H1 (cell line): ENCODE measurements at regions of chr17 and their contacts with region 1.

Region 1: GRCh38 chr17:81484195-81484979 is 28.2 kb downstream of the ACTG1 start:
- DNase-seq: peak; percentile 64 to 93
- H3K4me3 ChIP-seq: peak overlapping the region; percentile 27 to 66 (median 46)
- H3K27ac ChIP-seq: no peak overlapping the region
- H3K4me1 ChIP-seq: peaks cover 0 to 29% (median 16%) of the 10 kb centered on the region in 4 experiments; a peak in 6 of 7 replicates
- H3K27me3 ChIP-seq: peaks cover 18 to 49% (median 47%) of the 10 kb centered on the region in 4 experiments
- CTCF ChIP-seq: peak; percentile 85 to 97 (median 85)
- EP300 ChIP-seq: no peak
- POLR2A ChIP-seq: no peak
- RAD21 ChIP-seq: peak; percentile 85 to 92

Region 2: DNA sequence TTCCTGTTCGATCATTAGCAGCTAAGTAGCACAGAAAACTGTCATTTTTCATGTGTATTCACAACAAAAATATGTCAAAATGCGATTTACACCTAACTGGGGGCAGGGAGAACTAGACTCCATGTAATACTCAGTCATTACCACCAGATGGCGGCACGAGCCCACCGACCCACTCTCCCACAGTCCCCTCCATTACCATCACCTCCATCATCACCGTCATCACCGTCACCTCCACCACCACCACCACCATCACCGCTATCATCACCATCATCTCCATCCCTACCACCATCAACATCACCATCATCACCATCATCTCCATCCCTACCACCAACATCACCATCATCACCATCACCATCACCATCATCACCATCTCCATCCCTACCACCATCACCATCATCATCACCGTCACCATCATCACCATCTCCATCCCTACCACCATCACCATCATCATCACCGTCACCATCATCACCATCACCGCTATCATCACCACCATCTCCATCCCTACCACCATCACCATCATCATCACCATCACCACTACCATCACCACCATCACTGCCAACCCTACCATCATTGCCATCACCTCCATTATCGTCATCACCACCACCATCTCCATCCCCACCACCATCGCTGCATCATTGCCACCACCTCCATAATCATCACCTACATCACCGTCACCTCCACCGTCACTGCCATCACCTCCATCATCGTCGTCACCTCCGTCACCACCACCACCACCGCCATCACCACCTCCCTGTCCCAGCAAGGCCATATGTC is 230.8 kb before region 1 on chr17:
- CTCF ChIA-PET with region 1: interaction called, 50 read pairs
- POLR2A ChIA-PET with region 1: interaction called, 3 read pairs
- DNase-seq: peak in 1 of 2 experiments; percentile 74
- H3K4me3 ChIP-seq: no peak overlapping the region
- H3K27ac ChIP-seq: no peak overlapping the region
- H3K4me1 ChIP-seq: peaks cover 0 to 8% (median 2%) of the 10 kb centered on the region in 4 experiments; a peak in 3 of 7 replicates
- H3K27me3 ChIP-seq: no peaks in the 10 kb centered on the region
- CTCF ChIP-seq: peak; percentile 74 to 88 (median 87)
- EP300 ChIP-seq: no peak
- POLR2A ChIP-seq: no peak
- RAD21 ChIP-seq: peak; percentile 89 to 98

Region 3: DNA sequence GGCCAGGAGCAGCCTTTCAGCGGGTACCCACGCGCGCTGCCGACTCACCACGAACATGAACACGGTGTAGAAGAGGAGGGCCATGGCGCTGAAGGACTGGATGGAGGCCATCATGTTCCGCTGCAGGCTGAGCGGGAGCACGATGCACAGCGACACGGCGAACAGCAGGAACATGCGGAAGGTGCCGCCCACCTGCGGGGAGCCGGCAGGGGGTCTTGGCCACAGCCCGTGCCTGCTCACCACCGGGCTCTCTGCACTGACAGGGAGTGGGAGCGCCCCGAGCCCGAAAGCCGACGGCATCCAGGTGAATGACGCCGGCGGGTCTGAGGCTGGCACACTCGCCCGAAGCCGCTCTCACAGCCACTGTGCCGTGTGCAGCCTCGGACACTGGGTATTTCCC is 202.2 kb before region 1 on chr17:
- CTCF ChIA-PET with region 1: no interaction called
- POLR2A ChIA-PET with region 1: no interaction called
- DNase-seq: no peak
- H3K4me3 ChIP-seq: no peak overlapping the region
- H3K27ac ChIP-seq: no peak overlapping the region
- H3K4me1 ChIP-seq: peaks cover 0 to 12% (median 0%) of the 10 kb centered on the region in 4 experiments; a peak in 4 of 7 replicates
- H3K27me3 ChIP-seq: no peaks in the 10 kb centered on the region
- CTCF ChIP-seq: no peak
- EP300 ChIP-seq: no peak
- POLR2A ChIP-seq: no peak
- RAD21 ChIP-seq: no peak

Region 4: DNA sequence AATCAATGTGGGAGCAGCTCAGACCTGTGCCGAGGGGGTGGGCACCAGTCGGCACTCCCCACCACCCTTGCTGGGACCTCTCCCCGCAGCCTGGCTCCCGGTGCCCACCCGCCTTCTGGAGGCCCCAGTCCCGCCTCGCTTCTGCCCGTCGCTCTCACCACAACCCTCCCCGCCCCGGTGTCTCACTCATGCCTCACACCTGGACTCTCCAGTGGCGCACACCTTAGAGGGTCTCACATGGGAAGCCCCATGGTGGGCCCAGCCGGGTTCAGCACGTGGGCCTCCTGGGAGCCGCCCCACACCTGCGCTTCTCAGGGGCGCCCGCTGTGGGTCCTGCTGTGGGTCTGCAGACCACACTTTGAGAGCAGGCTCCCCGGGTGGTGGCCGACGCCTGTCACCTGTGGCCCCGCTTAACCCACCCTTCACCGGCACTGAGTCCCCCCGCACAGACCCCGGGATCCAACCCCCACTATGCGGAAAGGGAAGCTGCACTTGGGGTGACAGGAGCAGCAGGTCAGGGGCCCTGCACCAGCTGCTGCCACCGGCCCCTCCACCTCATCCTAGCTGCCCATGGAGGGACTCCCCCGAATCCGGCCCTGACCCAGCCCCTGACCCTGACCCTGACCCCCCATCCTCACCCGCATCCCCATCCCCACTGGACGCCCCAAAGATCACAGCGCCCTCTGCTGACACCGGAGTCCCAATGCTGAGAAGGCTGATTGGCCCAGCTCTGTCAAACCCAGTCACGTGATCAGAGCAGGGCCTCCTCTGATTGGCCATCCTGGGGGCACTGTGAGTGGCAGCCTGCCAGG is 161.9 kb before region 1 on chr17:
- CTCF ChIA-PET with region 1: interaction called, 14 read pairs
- POLR2A ChIA-PET with region 1: no interaction called
- DNase-seq: peak in 1 of 2 experiments; percentile 71
- H3K4me3 ChIP-seq: no peak overlapping the region
- H3K27ac ChIP-seq: no peak overlapping the region
- H3K4me1 ChIP-seq: peaks cover 0 to 6% (median 2%) of the 10 kb centered on the region in 4 experiments; a peak in 5 of 7 replicates
- H3K27me3 ChIP-seq: 0 out of 7 replicates have a peak, but pooled peaks cover 0 to 2% (median 0%) of the 10 kb centered on the region in 4 experiments
- CTCF ChIP-seq: peak; percentile 33 to 69 (median 64)
- EP300 ChIP-seq: no peak
- POLR2A ChIP-seq: no peak
- RAD21 ChIP-seq: peak in 1 of 2 experiments; percentile 38; a peak in 2 of 4 replicates

Region 5: DNA sequence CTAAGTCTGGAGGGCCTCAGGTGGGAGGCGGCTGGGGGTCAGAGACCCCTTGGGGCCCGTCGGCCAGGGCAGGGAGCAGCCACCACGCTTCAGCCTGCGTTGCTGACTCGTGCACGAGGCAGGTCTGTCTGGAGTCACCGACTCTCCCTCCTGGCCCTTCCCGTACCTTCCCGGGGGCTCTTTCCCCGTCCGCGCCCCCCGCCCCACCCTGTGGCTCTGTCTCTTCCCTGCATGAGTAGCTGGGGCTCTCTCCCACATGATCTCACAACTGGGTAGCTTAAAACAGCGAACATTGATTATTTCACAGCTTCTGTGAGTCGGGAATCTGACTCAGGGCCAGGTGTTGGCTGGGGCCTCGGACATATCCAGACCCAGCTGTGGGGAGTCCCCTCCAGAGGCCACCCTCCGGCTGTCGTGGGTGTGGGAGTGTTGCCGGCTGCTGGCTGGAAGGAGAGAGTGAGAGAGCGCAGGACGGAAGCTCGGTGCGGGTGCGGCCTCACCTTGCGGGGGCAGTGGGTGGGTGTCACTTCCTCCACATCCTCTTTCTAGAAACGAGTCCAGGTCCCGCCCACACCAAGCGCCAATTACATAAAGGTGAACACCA is 71.8 kb before region 1 on chr17:
- CTCF ChIA-PET with region 1: interaction called, 28 read pairs
- POLR2A ChIA-PET with region 1: interaction called, 3 read pairs
- DNase-seq: no peak
- H3K4me3 ChIP-seq: no peak overlapping the region
- H3K27ac ChIP-seq: no peak overlapping the region
- H3K4me1 ChIP-seq: peaks cover 0 to 3% (median 0%) of the 10 kb centered on the region in 4 experiments; a peak in 1 of 7 replicates
- H3K27me3 ChIP-seq: peaks cover 0 to 3% (median 0%) of the 10 kb centered on the region in 4 experiments; a peak in 3 of 7 replicates
- CTCF ChIP-seq: no peak
- EP300 ChIP-seq: no peak
- POLR2A ChIP-seq: no peak
- RAD21 ChIP-seq: no peak

Region 6: GRCh38 chr17:81440876-81441244 is 43.5 kb before region 1 on chr17:
- CTCF ChIA-PET with region 1: interaction called, 41 read pairs
- POLR2A ChIA-PET with region 1: no interaction called
- DNase-seq: peak; percentile 50 to 90
- H3K4me3 ChIP-seq: no peak overlapping the region
- H3K27ac ChIP-seq: no peak overlapping the region
- H3K4me1 ChIP-seq: peaks cover 0 to 2% (median under 1%) of the 10 kb centered on the region in 4 experiments; a peak in 3 of 7 replicates
- H3K27me3 ChIP-seq: no peaks in the 10 kb centered on the region
- CTCF ChIP-seq: peak; percentile 88 to 98 (median 94)
- EP300 ChIP-seq: no peak
- POLR2A ChIP-seq: no peak
- RAD21 ChIP-seq: peak; percentile 67 to 73

Region 7: DNA sequence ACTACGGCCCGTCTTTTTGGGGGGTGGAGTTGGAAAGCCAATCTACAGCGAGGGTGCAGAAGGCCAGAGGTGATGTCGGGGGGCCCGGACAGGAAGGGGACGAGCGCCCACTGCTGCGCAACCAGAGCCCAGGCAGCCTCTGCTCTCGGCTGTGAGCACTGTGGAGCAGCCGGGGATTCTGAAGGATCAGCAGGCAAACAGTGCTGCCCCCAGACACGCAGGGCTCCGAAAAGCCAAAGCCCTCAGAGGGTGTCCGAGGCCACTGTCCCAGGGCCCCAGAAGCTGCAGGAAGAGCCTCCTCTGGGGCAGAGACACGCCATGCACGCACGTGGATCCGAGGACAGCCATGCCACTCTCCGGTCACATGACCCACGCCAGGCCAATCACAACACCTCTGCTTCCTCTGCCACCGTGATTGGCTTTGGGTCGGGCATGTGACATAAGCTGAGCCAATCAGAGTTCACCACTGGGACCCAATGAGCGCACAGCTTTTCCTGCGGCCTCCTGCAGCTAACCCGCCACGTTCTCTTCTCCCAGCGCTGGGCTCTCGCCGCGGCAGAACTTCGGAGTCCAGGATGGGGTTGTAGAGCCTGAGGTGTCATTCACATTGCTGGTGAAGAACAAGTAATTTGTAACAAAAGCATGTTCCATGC is 12.5 kb before region 1 on chr17:
- CTCF ChIA-PET with region 1: interaction called, 12 read pairs
- POLR2A ChIA-PET with region 1: interaction called, 4 read pairs
- DNase-seq: no peak
- H3K4me3 ChIP-seq: no peak overlapping the region
- H3K27ac ChIP-seq: no peak overlapping the region
- H3K4me1 ChIP-seq: peaks cover 0 to 3% (median 0%) of the 10 kb centered on the region in 4 experiments; a peak in 2 of 7 replicates
- H3K27me3 ChIP-seq: peaks cover 0 to 4% (median 0%) of the 10 kb centered on the region in 4 experiments; a peak in 1 of 7 replicates
- CTCF ChIP-seq: peak in 1 of 3 experiments; percentile 2; a peak in 2 of 4 replicates
- EP300 ChIP-seq: no peak
- POLR2A ChIP-seq: no peak
- RAD21 ChIP-seq: peak in 1 of 2 experiments; percentile 37; a peak in 3 of 4 replicates

Region 8: DNA sequence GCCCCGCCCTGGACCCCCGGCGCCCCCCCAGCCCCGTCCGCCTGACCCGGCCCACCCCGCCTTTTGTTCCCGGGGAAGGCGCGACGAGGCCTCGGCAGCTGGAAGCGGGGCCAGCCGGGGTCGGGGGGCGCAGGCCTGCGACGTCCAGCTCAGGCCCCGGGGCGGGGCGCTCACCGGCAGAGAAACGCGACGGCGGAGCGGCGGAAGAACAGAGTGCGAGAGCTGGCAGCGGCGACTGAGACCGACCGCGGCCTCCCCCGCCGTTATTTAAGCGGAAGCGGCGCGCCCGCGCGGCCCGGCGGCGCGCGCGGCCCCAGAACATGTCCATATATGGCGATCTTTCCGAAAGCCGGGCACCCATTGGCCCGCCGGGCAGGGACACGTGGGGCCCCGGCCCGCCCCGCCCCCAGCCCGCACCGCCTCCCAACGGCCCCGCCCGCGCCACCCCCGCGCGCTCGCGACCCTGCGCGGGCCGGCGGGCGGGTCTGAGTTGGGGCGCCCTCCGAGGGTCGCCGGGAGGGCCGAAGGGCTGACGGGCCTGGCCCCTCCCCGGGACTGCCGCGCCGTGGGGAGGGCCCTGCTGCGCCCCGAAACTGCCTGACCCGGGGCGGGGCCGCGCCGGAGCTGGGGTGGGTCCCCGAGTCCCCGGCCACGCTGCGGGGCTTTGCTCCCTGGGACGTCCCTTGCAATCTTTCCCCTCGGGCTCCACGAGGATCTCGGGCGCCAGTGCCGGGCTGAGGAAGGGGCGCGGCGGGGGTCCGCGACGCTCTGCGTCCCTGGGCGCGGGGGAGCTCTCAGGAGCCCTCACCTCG is 28.4 kb after region 1 on chr17 and contains the start of gene ACTG1:
- CTCF ChIA-PET with region 1: interaction called, 12 read pairs
- POLR2A ChIA-PET with region 1: interaction called, 1,004 read pairs
- DNase-seq: peak in 1 of 2 experiments; percentile 91
- H3K4me3 ChIP-seq: peak within 1 kb of the TSS; percentile 75 to 93 (median 90)
- H3K27ac ChIP-seq: peak within 1 kb of the TSS; percentile 89
- H3K4me1 ChIP-seq: peaks cover 0 to 20% (median 11%) of the 10 kb centered on the region in 4 experiments; a peak in 5 of 7 replicates
- H3K27me3 ChIP-seq: peaks cover 0 to 3% (median under 1%) of the 10 kb centered on the region in 4 experiments; a peak in 2 of 7 replicates
- CTCF ChIP-seq: no peak
- EP300 ChIP-seq: peak in 1 of 2 experiments; percentile 64; a peak in 1 of 3 replicates
- POLR2A ChIP-seq: peak; percentile 97
- RAD21 ChIP-seq: no peak
- total RNA-seq, gene ACTG1: 3,535 and 3,691 TPM in 2 replicates

Region 9: DNA sequence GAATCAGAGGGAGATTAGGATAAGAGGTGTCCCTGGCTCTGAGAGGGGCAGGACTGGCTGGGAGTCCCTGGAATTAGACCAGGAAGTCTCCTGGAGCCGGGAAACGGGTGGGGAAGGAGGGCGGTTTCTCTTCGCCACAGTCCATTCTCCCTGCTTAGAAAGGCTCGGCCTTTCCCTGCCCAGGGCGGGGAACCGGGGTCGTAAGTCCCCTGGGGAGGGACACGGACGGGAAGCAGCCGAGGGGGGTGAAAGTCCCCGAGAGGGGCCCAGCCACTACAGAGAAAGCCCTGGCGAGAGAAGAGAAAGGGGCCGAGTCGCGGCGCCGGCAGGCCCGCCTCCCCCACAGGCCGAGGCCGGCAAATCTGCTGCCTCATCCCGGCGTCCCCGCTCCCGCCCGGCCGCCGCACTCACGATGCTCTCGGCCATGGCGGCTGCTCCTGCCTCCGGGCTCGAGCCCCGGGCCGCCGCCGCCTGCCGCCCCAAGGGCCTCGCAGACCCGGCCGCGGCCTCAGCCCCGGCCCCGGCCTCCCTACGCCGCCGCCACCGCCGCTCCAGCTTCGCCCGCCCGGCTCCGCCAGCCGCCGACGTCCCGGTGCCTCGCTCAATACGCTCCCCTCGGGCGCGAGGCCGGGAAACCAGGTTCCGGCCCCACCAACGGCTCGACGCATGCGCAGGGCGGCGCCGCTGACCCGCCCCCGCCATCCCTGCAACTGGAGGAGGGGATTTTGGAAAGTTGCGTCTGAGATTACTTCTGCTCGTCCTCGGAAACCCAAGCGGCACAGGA is 152.3 kb after region 1 on chr17 and contains the starts of genes NPLOC4 and TSPAN10:
- CTCF ChIA-PET with region 1: no interaction called
- POLR2A ChIA-PET with region 1: no interaction called
- DNase-seq: peak; percentile 58 to 94
- H3K4me3 ChIP-seq: peak within 1 kb of the TSS; percentile 78 to 96 (median 87)
- H3K27ac ChIP-seq: peak within 1 kb of the TSS; percentile 83
- H3K4me1 ChIP-seq: no peaks in the 10 kb centered on the region
- H3K27me3 ChIP-seq: no peaks in the 10 kb centered on the region
- CTCF ChIP-seq: no peak
- EP300 ChIP-seq: peak in 1 of 2 experiments; percentile 71; a peak in 1 of 3 replicates
- POLR2A ChIP-seq: peak in 1 of 2 experiments; percentile 92; a peak in 2 of 3 replicates
- RAD21 ChIP-seq: no peak; a peak in 1 of 4 replicates
- total RNA-seq, gene NPLOC4: 79.8 and 92.7 TPM in 2 replicates
- total RNA-seq, gene TSPAN10: 0.96 and 0.99 TPM in 2 replicates